PC-9 (cell line): ENCODE measurements at regions of chr5 and their contacts with region 1.

Region 1: GRCh38 chr5:76663573-76663972 is 40.4 kb upstream of the F2RL2 start:
- DNase-seq: no peak
- H3K4me3 ChIP-seq: no peak overlapping the region
- H3K27ac ChIP-seq: no peak overlapping the region
- H3K4me1 ChIP-seq: no peaks in the 10 kb centered on the region
- H3K27me3 ChIP-seq: no peaks in the 10 kb centered on the region
- CTCF ChIP-seq: no peak

Region 2: DNA sequence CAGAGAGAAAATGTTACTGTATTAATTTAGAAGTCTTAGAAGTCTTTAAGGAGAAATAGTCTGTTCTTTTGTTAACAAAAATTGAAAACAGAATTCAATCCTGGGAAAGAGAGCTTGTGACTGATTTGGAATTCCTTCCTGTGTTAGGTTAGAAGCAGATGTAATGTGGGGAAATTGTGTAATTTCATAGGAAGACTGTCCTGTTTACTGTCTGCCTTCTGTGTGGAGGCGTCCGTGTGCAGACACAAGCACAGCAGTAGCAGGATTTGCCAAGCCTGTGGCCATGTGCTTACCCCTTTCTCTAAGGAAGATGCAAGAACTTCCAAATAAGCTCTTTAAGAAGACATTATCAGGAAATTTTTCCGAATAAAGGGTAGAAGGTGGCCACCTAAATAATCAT is 15.7 kb after region 1 on chr5:
- CTCF ChIA-PET with region 1: no interaction called
- POLR2A ChIA-PET with region 1: interaction called, 37 read pairs
- intact Hi-C with region 1: no loop called
- DNase-seq: no peak
- H3K4me3 ChIP-seq: no peak overlapping the region
- H3K27ac ChIP-seq: no peak overlapping the region
- H3K4me1 ChIP-seq: no peaks in the 10 kb centered on the region
- H3K27me3 ChIP-seq: no peaks in the 10 kb centered on the region
- CTCF ChIP-seq: no peak

Region 3: DNA sequence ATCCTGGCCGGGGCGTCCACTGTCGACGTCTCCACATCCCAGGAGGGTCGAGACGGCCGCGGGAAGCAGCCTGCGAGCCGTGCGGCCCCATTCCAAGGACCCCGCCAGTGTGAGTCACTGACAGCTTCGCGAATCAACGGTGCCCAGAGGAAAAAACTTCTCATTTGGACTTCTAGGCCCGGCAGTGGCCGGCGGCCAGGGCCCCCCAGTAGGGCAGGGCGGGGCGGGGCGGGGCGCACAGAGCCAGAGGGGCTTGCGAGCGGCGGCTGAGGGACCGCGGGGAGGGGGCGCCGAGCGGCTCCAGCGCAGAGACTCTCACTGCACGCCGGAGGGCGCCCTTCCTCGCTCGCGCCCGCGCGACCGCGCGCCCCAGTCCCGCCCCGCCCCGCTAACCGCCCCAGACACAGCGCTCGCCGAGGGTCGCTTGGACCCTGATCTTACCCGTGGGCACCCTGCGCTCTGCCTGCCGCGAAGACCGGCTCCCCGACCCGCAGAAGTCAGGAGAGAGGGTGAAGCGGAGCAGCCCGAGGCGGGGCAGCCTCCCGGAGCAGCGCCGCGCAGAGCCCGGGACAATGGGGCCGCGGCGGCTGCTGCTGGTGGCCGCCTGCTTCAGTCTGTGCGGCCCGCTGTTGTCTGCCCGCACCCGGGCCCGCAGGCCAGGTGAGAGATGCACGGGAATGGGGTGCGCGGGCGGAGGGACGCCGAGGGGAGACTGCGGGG is 52.3 kb after region 1 on chr5 and contains the start of gene F2R:
- CTCF ChIA-PET with region 1: no interaction called
- POLR2A ChIA-PET with region 1: no interaction called
- intact Hi-C with region 1: no loop called
- DNase-seq: peak in 1 of 2 experiments; percentile 30
- H3K4me3 ChIP-seq: peak within 1 kb of the TSS; percentile 87
- H3K27ac ChIP-seq: no peak within 1 kb of the TSS
- H3K4me1 ChIP-seq: no peaks in the 10 kb centered on the region; the same call in 1 of the 2 replicates
- H3K27me3 ChIP-seq: no peaks in the 10 kb centered on the region
- CTCF ChIP-seq: peak; percentile 59; the same call in 1 of the 2 replicates
- total RNA-seq, gene F2R: 3.6 and 3.9 TPM in 2 replicates

Region 4: DNA sequence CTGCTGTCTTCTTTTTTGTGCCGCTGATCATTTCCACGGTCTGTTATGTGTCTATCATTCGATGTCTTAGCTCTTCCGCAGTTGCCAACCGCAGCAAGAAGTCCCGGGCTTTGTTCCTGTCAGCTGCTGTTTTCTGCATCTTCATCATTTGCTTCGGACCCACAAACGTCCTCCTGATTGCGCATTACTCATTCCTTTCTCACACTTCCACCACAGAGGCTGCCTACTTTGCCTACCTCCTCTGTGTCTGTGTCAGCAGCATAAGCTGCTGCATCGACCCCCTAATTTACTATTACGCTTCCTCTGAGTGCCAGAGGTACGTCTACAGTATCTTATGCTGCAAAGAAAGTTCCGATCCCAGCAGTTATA is 69.5 kb after region 1 on chr5:
- CTCF ChIA-PET with region 1: no interaction called
- POLR2A ChIA-PET with region 1: no interaction called
- intact Hi-C with region 1: no loop called
- DNase-seq: no peak
- H3K4me3 ChIP-seq: no peak overlapping the region
- H3K27ac ChIP-seq: no peak overlapping the region
- H3K4me1 ChIP-seq: no peaks in the 10 kb centered on the region
- H3K27me3 ChIP-seq: no peaks in the 10 kb centered on the region
- CTCF ChIP-seq: no peak

Region 5: GRCh38 chr5:76754668-76755078 is 91.1 kb after region 1 on chr5:
- CTCF ChIA-PET with region 1: no interaction called
- POLR2A ChIA-PET with region 1: no interaction called
- intact Hi-C with region 1: no loop called
- DNase-seq: no peak
- H3K4me3 ChIP-seq: no peak overlapping the region
- H3K27ac ChIP-seq: no peak overlapping the region
- H3K4me1 ChIP-seq: peaks cover 25% of the 10 kb centered on the region
- H3K27me3 ChIP-seq: no peaks in the 10 kb centered on the region
- CTCF ChIP-seq: no peak